Caco-2 (cell line): ENCODE measurements at regions of chrX and their contacts with region 1.

Region 1: DNA sequence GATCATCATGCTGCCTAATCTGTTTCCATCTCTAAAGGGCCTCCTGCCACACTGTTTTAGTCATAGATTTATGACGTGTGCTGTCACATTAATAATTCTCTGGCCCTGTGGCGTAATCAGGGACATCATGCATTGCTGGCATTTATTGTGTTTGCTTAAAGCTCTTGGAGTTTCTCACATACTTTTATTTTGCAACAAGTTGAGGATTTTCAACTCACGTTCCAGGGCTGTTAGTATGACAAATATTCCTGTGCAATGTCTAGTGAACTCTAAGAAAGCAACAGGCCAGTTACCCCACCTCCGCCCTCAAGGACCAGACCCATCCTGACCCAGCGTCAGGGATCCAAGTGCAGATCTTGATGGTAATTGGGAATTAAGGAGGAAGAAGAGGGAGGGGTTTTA is 7.8 kb upstream of the PIGA start:
- DNase-seq: peak; percentile 61 to 65
- H3K4me3 ChIP-seq: no peak overlapping the region
- H3K4me3 Mint-ChIP-seq: no peak overlapping the region
- H3K27ac Mint-ChIP-seq: no peak overlapping the region
- H3K4me1 ChIP-seq: 0 out of 2 replicates have a peak, but pooled peaks cover 3% of the 10 kb centered on the region
- H3K4me1 Mint-ChIP-seq: no peaks in the 10 kb centered on the region
- H3K27me3 ChIP-seq: no peaks in the 10 kb centered on the region
- H3K27me3 Mint-ChIP-seq: peaks cover 6% of the 10 kb centered on the region
- CTCF ChIP-seq: no peak

Region 2: DNA sequence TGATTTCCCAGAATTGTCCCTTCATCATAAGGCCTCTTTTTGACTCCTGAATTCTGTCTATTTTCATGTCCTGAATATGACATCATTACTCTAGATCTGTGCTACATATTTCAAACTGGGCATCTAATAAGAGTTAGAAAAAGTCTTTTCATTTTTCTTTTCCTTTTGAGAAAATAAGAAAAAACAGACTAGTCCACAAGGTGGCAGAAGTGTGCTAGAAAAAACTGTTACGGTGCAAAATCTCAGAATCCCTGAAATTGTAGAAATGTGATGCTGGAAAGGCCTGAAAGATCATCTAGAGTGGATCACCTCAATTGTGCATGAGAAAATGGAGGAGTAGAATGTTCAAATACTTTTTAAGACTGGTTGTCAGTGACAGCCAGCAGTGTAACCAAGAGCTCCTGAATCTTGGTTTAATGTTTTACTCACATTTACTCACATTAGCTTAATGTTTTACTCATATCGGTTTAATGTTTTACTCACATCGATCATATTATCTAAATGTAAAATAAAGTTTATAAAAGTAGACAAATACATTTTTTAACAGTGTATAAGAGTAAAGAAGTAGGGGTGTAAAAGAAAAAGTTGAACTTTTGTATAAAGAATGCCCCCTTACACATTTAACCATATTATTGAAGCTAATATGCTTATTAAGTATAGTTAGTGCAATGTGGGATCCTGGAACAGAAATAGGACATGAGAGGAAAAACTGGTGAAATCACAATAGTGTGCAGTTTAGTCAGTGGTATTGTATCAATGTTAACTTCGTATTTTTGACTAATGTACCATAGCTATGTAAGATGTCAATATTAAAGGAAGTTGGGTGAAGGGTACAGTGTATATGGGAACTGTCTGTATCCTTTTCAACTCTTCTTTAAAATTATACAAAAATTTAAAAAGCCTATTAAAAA is 42.9 kb before region 1 on chrX:
- CTCF ChIA-PET with region 1: no interaction called
- POLR2A ChIA-PET with region 1: no interaction called
- intact Hi-C with region 1: loop called (anchors 1 kb)
- DNase-seq: peak in 1 of 2 experiments; percentile 4
- H3K4me3 ChIP-seq: no peak overlapping the region
- H3K4me3 Mint-ChIP-seq: peak overlapping the region; percentile 57
- H3K27ac Mint-ChIP-seq: no peak overlapping the region
- H3K4me1 ChIP-seq: peaks cover 8% of the 10 kb centered on the region; the same call in 1 of the 2 replicates
- H3K4me1 Mint-ChIP-seq: peaks cover 5% of the 10 kb centered on the region
- H3K27me3 ChIP-seq: no peaks in the 10 kb centered on the region
- H3K27me3 Mint-ChIP-seq: no peaks in the 10 kb centered on the region
- CTCF ChIP-seq: peak; percentile 21 to 30